Naive thymus-derived CD8-positive, alpha-beta T cell (primary cell): ENCODE measurements at regions of chr6 and their contacts with region 1.

Region 1: GRCh38 chr6:27893059-27893835 is 18.9 kb downstream of the OR2B2 start:
- DNase-seq: peak; percentile 69 to 96 (median 90)
- ATAC-seq: peak; percentile 72 to 78
- H3K4me3 Mint-ChIP-seq: no peak overlapping the region
- H3K27ac Mint-ChIP-seq: no peak overlapping the region
- H3K4me1 Mint-ChIP-seq: peaks cover 7 to 38% (median 28%) of the 10 kb centered on the region in 4 donors
- H3K27me3 Mint-ChIP-seq: no peaks in the 10 kb centered on the region

Region 2: DNA sequence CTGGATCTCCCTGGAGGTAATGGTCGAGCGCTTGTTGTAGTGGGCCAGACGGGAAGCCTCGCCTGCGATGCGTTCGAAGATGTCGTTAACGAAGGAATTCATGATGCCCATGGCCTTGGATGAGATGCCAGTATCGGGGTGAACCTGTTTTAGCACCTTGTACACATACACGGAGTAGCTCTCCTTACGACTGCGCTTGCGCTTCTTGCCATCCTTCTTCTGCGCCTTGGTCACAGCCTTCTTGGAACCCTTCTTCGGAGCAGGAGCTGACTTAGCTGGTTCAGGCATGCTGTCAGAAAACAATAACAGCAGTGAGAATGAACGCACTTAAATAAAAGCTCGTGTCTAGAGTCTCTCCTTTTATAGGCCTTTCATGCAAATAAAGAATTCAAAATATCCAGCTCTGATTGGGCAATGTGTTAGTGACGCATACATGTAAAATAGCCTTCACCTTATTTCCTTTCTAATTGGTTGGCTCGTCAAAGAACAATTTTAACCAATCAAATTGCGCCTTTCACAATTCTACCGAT is 1676.8 kb before region 1 on chr6:
- POLR2A ChIA-PET with region 1: interaction called, 12 read pairs
- DNase-seq: peak; percentile 34 to 95 (median 86)
- ATAC-seq: peak; percentile 81 to 84
- H3K4me3 Mint-ChIP-seq: no peak overlapping the region
- H3K27ac Mint-ChIP-seq: no peak overlapping the region
- H3K4me1 Mint-ChIP-seq: peaks cover 0 to 12% (median 7%) of the 10 kb centered on the region in 4 donors
- H3K27me3 Mint-ChIP-seq: no peaks in the 10 kb centered on the region

Region 3: GRCh38 chr6:27479319-27480182 is 413.7 kb before region 1 on chr6:
- POLR2A ChIA-PET with region 1: interaction called, 25 read pairs
- DNase-seq: peak; percentile 75 to 97 (median 92)
- ATAC-seq: peak; percentile 71 to 74
- H3K4me3 Mint-ChIP-seq: no peak overlapping the region
- H3K27ac Mint-ChIP-seq: no peak overlapping the region
- H3K4me1 Mint-ChIP-seq: peaks cover 0 to 15% (median 3%) of the 10 kb centered on the region in 4 donors
- H3K27me3 Mint-ChIP-seq: no peaks in the 10 kb centered on the region

Region 4: DNA sequence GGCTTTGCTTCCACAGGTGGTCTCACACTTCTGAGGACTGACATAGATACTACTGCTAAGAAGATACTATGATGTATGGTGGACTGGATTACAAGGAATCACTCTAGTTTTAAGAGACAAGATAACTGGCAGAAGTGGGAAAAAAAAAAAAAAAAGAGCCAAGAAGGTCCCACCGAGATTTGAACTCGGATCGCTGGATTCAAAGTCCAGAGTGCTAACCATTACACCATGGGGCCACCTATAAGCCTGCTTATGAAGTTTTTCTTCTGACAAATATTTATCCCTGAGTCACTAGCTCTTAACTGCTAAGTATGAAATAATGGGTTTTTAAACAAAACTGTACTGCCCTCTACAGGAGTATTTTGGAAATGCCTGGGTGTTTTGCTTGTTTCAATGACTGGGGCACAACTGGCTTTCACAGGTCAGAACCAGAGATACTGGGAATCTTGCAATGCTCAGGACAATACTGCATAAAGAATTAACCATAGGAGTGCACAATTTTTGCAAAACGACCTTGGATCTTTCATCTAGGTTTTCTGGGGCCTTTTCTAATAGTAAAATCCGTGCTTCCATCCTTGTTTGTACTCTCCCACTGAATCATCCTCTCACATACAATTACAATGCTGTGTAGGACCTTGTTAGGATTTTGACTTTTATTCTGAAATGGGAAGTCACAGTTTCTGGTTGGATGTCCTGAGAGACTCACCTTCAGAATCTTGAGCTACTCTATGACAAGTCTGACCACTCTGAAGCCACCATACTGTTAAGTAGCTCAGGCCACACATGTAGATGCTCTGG is 97.4 kb before region 1 on chr6:
- POLR2A ChIA-PET with region 1: interaction called, 23 read pairs
- DNase-seq: peak in 8 of 10 donors; percentile 45 to 89 (median 74)
- ATAC-seq: peak; percentile 53 to 66
- H3K4me3 Mint-ChIP-seq: peak overlapping the region in 1 of 10 donors; percentile 14
- H3K27ac Mint-ChIP-seq: peak overlapping the region in 6 of 10 donors; percentile 28 to 72 (median 51)
- H3K4me1 Mint-ChIP-seq: peaks cover 8 to 28% (median 24%) of the 10 kb centered on the region in 4 donors
- H3K27me3 Mint-ChIP-seq: peaks cover 6 to 11% (median 7%) of the 10 kb centered on the region in 5 donors

Region 5: DNA sequence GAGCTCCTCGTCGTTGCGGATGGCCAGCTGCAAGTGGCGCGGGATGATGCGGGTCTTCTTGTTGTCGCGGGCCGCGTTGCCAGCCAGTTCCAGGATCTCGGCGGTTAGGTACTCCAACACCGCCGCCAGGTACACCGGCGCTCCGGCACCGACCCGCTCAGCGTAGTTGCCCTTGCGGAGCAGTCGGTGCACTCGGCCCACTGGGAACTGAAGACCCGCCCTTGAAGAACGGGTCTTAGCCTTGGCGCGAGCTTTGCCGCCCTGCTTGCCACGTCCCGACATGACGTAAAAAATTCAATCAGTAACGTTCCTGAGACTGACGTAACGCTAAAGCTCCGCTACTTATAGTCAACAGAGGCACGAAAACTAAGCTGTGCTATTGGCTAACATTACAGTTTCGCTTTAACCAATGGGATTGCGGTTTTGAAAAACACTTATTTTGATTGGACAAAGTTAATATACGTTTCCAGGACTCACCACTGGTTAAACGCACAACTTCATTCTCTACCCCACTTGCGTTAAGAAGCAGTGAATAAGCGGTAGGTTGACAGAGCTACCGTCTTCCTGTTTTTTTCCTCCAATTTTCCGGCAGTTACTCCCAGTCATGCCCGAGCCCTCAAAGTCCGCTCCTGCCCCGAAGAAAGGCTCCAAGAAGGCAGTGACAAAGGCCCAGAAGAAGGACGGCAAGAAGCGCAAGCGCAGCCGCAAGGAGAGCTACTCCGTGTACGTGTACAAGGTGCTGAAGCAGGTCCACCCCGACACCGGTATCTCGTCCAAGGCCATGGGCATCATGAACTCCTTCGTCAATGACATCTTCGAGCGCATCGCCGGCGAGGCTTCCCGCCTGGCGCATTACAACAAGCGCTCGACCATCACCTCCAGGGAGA is 54.9 kb before region 1 on chr6:
- POLR2A ChIA-PET with region 1: interaction called, 251 read pairs
- DNase-seq: peak; percentile 63 to 95 (median 88)
- ATAC-seq: peak; percentile 78 to 81
- H3K4me3 Mint-ChIP-seq: no peak overlapping the region
- H3K27ac Mint-ChIP-seq: no peak overlapping the region
- H3K4me1 Mint-ChIP-seq: peaks cover 8 to 36% (median 18%) of the 10 kb centered on the region in 4 donors
- H3K27me3 Mint-ChIP-seq: peaks cover 0 to 8% (median 0%) of the 10 kb centered on the region in 5 donors

Region 6: GRCh38 chr6:27951040-27951439 is 57.8 kb after region 1 on chr6:
- POLR2A ChIA-PET with region 1: no interaction called
- DNase-seq: no peak
- ATAC-seq: no peak
- H3K4me3 Mint-ChIP-seq: no peak overlapping the region
- H3K27ac Mint-ChIP-seq: no peak overlapping the region
- H3K4me1 Mint-ChIP-seq: no peaks in the 10 kb centered on the region
- H3K27me3 Mint-ChIP-seq: peaks cover 34 to 82% (median 45%) of the 10 kb centered on the region in 5 donors

Region 7: DNA sequence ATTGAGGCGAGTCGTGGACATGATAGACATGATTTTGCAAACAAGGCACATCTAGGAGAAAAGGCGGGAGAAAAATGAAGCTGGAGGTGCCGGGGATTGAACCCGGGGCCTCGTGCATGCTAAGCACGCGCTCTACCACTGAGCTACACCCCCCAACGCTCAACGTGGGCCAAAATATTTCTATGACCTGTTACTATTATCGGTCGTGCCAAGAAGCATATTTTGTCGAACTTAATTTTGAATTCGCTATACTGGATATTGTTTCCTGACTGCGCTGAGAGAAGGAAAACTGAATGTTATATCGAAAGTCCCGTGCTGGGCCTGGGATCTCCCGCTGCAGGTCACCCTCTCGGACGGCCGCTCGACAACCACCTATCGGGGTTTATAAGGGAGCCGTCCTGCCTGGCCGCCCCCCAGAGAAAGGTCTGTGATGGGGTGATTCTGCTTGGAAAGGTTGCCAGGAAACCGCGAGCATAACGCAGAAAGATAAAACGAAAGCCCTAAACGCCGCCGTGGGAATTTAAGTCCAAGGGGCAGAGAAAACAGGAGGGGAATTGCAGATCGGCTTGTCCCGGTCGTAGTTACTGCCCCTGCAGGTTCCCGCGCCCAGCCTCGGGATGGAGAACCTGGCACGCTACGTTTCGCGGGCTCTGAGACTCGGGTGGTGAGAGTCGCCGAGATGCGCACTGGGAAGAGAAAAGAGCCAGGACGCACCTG is 970.5 kb after region 1 on chr6:
- POLR2A ChIA-PET with region 1: interaction called, 13 read pairs
- DNase-seq: peak; percentile 52 to 96 (median 88)
- ATAC-seq: peak; percentile 36 to 45
- H3K4me3 Mint-ChIP-seq: peak overlapping the region; percentile 89 to 98 (median 96)
- H3K27ac Mint-ChIP-seq: peak overlapping the region; percentile 85 to 100 (median 95)
- H3K4me1 Mint-ChIP-seq: peaks cover 23 to 50% (median 40%) of the 10 kb centered on the region in 4 donors
- H3K27me3 Mint-ChIP-seq: peaks cover 0 to 8% (median 0%) of the 10 kb centered on the region in 5 donors